Activated naive CD4-positive, alpha-beta T cell treated with anti-CD3 and anti-CD28 coated beads for 36 hours (primary cell): ENCODE measurements at regions of chr14 and their contacts with region 1.

Region 1: GRCh38 chr14:57317316-57317715 is 48.5 kb downstream of the AP5M1 start:
- DNase-seq: peak; percentile 85
- H3K4me3 Mint-ChIP-seq: no peak overlapping the region
- H3K27ac Mint-ChIP-seq: no peak overlapping the region
- H3K4me1 Mint-ChIP-seq: peaks cover 5% of the 10 kb centered on the region
- H3K27me3 Mint-ChIP-seq: peaks cover 4% of the 10 kb centered on the region

Region 2: GRCh38 chr14:56555921-56556570 is 761.3 kb before region 1 on chr14:
- CTCF ChIA-PET with region 1: no interaction called
- intact Hi-C with region 1: loop called (anchors 2 kb)
- DNase-seq: no peak
- H3K4me3 Mint-ChIP-seq: no peak overlapping the region
- H3K27ac Mint-ChIP-seq: no peak overlapping the region
- H3K4me1 Mint-ChIP-seq: no peaks in the 10 kb centered on the region
- H3K27me3 Mint-ChIP-seq: peaks cover 8% of the 10 kb centered on the region

Region 3: DNA sequence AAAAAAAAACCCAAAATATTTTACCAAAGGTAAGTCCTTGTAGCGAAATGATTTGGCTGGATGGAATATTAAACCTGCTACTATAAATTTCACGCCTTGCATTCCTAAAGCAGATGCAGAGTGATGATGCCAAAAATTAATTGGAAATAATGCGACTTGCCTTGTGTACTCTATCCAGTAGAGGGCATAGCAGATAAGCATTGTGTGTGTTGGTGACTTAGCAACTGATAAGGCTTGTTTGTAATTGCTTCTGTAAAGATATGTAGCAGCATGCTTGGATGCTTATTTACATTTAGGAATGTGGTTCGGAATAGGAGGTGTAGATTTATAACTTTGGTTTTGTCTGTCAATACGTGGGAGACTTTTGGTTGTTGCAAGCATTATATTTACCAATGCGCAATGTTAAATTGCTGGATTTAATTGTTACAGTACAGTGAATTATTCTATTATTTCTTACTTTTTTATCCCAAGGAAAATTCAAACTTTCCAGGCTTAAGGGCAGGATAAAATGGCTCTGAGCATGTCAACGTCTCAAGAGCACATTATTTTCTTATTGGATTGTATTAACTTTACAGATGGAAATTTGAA is 657.3 kb before region 1 on chr14:
- CTCF ChIA-PET with region 1: no interaction called
- intact Hi-C with region 1: loop called (anchors 1 kb)
- DNase-seq: no peak
- H3K4me3 Mint-ChIP-seq: no peak overlapping the region
- H3K27ac Mint-ChIP-seq: no peak overlapping the region
- H3K4me1 Mint-ChIP-seq: no peaks in the 10 kb centered on the region
- H3K27me3 Mint-ChIP-seq: no peaks in the 10 kb centered on the region

Region 4: DNA sequence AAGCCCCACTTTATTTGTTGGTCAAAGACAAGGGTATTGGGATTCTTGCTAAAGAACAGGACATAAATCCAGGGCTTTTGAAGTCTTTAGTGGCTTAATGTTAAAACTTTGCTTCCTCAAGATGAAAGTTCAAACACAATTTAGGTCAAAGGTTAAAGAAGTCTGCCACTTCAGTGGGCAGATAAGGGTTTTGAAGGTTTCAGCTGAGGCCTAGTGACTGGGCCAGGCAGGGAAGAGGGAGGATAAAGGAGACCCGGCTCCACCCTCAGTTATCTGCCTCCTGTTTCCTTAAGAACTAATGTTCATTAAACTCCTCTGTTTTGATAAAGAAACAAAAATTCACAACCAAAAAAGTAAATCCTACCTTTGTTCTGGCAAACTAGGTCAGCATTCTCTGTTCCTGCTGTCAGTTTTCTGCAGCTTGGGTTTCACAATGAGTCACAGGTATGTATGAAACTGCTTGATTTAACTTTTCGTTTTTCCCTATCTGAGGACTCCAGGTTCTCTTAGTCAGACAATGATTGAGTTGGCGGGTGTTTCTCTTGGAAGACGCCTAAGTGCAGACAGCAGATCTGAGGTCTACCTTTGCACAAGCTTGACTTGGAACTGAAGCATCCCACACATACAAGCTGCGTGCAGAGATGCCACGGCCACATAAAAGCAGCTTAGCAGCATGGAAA is 256.9 kb before region 1 on chr14:
- CTCF ChIA-PET with region 1: no interaction called
- intact Hi-C with region 1: loop called (anchors 2 kb)
- DNase-seq: peak; percentile 52
- H3K4me3 Mint-ChIP-seq: no peak overlapping the region
- H3K27ac Mint-ChIP-seq: no peak overlapping the region
- H3K4me1 Mint-ChIP-seq: peaks cover 21% of the 10 kb centered on the region
- H3K27me3 Mint-ChIP-seq: peaks cover 8% of the 10 kb centered on the region